AG04449 (cell line): ENCODE measurements at regions of chr6 and their contacts with region 1.

Region 1: DNA sequence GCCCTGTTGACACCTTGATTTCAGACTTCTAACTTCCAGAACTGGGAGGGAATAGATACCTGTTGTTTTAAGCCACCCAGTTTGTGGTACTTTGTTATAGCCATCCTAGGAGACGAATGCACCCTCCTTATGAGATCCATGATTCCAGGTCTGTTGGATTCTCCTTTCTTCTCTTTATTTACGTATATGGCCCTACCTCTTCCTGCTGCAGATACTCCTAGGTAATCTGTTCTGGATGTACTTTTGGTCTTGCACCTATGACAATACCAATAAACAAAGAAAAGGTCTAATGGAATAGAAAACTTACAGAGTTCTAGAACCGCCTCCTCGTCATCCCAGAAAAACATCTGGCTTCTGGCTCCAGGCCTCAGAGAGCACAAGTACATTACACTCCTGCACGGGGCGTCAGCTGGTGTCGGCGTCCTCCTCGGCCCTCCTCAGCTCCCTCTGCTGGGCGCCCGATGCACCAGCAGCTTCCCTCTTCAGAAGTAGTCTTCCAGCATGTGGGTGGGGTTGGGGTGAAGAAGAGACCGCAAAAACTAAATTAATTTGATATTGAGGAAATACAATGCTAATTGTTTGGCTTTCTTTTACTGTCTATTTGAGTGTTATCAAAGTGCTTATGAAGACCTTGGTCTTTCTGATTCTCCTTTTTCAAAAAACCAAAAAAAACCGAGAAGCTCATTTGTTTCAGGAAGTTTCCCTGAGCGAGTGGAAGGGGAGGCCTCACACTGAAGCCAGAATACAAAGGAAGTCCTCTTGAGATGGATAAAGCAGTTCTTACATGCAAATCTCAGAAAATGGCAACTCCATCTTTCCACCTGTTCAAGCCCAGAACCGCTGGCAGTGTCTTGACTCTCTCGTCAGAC is 9.7 kb upstream of the ATXN1 start:
- DNase-seq: no peak
- H3K4me3 ChIP-seq: no peak overlapping the region
- CTCF ChIP-seq: peak; percentile 90

Region 2: DNA sequence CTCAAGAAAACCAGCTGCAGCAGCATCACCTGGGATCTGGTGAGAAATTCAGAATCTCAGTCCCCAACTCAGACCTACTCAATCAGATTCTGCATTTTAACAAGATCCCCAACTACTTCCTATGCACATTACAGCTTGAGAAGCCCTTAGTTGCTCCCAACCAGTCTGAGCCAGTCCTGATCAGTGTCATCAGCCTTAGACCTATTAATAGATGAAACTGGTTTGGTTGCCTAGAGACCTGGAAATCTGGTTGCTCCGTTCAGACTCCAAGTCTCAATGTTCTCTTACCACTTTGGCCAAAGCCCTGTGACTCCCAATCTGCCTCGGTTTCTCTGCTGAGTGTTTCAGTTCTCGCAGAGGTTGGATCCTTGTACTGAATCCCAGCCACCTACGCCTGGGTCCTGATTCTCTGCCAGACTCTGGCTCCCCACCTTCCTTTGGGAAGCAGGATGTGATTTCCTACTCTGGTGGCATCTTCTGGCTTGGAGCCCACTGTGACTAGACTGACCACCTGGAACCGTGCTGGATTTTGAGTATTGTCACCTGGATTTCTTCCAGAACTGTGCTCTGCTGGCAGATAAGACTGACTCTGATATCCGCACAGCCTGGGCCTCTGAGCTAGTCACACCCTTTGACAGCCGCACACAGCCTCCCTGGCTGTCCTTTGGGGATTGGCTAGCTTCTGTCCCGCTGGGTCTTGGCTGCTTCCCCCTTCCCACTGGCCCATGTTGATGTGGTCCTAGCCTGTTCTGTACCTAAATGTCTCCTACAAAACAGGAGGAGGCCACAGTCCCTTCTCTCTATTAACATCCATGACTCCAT is 10.6 kb after region 1 on chr6:
- CTCF ChIA-PET with region 1: interaction called, 56 read pairs
- POLR2A ChIA-PET with region 1: interaction called, 3 read pairs
- DNase-seq: no peak
- H3K4me3 ChIP-seq: no peak overlapping the region
- CTCF ChIP-seq: no peak

Region 3: DNA sequence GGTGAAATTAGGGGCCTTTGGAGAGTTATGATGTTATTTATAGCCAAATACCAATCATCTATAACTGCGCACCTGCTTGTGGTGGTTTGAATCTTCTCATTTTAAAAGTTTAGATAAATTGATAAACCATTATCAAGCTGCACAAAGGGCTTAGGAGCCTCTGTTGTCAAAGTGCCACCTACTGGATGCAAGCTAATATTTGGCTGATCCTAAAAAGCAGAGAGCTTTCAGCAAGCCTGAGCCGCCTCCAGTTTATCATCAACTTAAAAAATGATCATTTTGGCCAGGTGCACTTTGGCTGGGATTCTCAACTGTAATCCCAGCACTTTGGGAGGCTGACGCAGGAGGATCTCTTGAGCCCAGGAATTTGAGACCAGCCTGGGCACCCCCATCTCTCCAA is 48.8 kb after region 1 on chr6:
- CTCF ChIA-PET with region 1: interaction called, 13 read pairs
- POLR2A ChIA-PET with region 1: no interaction called
- DNase-seq: no peak
- H3K4me3 ChIP-seq: no peak overlapping the region
- CTCF ChIP-seq: peak; percentile 37

Region 4: DNA sequence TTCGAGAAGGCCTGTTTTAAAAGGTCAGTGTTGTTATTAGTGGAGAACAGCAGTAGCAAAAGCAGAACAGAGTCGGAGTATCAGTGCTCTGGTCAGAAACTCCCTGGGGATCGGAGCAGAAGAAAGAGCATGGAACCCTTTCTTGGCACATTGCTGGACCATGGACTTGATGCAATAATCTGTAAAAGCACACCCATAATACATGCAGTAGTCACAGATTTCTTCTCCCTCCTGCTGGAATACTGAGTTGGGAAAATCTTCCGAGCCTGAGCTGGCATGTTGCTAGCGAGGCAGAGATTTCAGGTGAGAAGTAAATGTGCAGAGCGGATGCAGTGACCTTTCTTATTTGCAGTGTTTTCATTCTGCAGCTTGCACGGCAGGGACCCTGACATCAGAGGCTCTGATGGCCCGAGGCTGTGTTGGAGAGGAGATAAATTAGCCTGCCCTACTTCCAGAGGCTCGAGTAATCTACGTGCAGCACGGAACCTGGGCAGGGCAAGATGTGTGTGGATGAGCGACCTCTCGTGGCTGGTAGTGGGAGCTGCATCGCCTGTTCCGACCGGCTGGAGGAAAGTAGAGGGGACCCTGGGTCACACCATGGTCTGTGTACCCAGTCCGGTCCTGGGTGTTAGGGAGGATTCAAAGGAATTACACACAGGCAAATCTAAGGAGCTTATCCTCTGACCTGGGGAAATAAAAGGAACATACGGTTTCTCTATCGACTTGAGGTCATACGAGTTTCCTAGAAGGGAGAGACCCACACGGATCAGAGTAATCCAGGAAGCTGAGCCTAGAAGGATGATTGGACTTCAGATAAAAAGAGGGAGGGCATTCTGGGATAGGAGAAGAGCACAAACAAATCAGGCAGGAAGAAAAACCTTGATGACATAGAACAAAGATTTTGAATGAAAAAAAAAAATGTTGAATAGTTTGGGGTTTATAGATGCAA is 193.9 kb after region 1 on chr6:
- CTCF ChIA-PET with region 1: interaction called, 37 read pairs
- POLR2A ChIA-PET with region 1: no interaction called
- DNase-seq: no peak
- H3K4me3 ChIP-seq: no peak overlapping the region
- CTCF ChIP-seq: peak; percentile 93

Region 5: GRCh38 chr6:17086469-17086868 is 315.5 kb after region 1 on chr6:
- CTCF ChIA-PET with region 1: interaction called, 150 read pairs
- POLR2A ChIA-PET with region 1: no interaction called
- DNase-seq: peak; percentile 24
- H3K4me3 ChIP-seq: no peak overlapping the region
- CTCF ChIP-seq: peak; percentile 57